Activated CD8-positive, alpha-beta T cell treated with anti-CD3 and anti-CD28 coated beads, Interleukin-2, amount 10 ng/mL, durations not matched to agents 7 days and 5 days (primary cell): ENCODE measurements at regions of chr10 and their contacts with region 1.

Region 1: DNA sequence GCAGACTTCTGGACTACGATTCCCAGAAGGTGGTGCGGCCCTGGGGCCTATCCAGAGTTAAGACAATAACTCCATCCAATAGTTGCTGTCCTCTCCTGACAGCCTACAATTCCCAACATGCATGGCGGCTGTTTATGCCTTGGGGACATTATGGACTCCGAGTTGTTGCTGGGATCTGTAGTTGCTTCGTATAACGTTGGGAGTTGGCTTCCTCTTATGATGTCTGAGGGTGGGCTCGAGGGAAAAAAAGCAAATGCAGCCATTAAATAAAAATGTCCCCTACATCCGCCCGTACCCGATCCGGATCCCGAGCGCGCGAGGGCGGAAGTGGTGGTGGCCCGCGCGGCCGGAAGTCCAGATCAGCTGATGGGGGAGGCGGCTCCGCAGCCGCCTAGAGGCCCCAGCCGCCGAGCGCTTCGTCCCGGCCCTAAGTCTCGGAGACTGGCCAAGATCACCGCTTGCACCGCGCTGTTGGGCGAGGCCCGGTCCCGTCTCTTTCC is at the start of gene ZSWIM8:
- DNase-seq: peak; percentile 92
- ATAC-seq: peak; percentile 86
- H3K4me3 Mint-ChIP-seq: peak within 1 kb of the TSS; percentile 98
- H3K27ac Mint-ChIP-seq: peak within 1 kb of the TSS; percentile 99
- H3K4me1 Mint-ChIP-seq: peaks cover 50% of the 10 kb centered on the region
- H3K27me3 Mint-ChIP-seq: no peaks in the 10 kb centered on the region
- total RNA-seq, gene ZSWIM8: 58.3 to 69.3 TPM

Region 2: DNA sequence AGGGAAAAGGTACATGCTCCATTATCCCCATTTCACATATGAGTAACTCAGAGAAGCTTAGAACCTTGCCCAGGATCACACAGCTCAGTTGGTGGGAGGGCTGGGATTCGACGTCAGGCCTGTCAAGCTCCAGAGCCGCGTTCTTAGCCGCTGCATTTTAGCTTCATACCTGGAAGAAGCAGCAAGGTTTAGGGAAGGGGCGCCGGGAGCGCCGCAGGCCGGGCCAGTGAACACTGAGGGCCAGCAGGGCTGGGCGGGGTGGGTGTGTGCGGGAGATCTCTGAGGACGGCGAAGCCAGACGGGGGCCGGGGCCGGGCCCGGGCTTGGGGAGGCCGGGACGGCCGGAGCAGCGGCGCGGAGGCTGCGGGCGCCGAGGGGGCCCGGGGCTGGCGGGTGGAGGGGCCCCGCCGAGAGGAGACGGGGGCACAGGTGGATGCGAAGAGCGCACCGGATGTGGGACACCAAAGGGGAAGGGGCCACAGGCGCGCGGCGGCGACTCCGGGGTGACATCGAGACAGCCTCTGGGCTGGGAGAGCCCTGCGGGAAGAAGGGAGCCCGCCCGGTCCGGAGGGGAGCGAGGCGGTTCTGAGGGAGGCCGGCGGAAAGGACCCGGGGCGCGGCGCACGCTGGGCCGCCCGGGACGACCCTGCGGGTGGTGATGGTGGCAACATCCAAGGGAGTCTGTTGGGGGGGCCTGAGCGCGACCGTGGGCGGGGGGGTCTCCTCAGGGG is 25.6 kb after region 1 on chr10:
- CTCF ChIA-PET with region 1: interaction called, 10 read pairs
- POLR2A ChIA-PET with region 1: interaction called, 24 read pairs
- DNase-seq: peak; percentile 71
- ATAC-seq: peak; percentile 37
- H3K4me3 Mint-ChIP-seq: peak overlapping the region; percentile 92
- H3K27ac Mint-ChIP-seq: peak overlapping the region; percentile 93
- H3K4me1 Mint-ChIP-seq: peaks cover 48% of the 10 kb centered on the region
- H3K27me3 Mint-ChIP-seq: no peaks in the 10 kb centered on the region